Psoas muscle (tissue), 8 donors: ENCODE measurements at regions of chr12 and their contacts with region 1.

Region 1: DNA sequence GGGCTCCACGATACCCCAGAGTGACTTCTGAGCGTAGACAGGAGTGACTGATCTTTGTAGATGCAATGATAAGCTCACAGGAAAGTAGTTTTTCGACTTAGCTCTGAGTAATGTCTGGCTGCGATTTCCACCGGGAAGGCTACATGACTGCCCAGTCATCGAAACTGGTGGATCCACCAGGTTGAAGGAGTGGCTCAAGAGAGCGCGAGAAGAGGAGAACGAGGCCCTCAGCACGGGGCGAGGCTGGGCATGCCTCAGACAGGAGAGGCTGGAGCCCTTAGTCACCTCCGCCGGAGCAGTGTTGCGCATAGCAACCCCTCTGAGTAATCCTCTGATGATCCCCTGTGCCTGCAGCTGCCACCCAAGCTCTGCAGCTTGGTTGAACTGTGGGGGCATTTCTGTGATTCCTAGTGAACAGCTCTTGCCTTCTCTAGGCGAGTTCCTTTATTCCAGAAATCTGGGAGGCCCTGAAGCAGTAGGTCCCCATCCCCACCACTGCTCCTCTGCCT is 25.6 kb downstream of the ELK3 start:
- DNase-seq: no peak
- ATAC-seq: peak in 3 of 4 donors; percentile 27 to 60 (median 36)
- H3K4me3 ChIP-seq: no peak overlapping the region
- H3K27ac ChIP-seq: no peak overlapping the region
- H3K4me1 ChIP-seq: peaks cover 4% of the 10 kb centered on the region
- H3K27me3 ChIP-seq: peaks cover 0 to 7% (median 0%) of the 10 kb centered on the region in 3 donors
- CTCF ChIP-seq: no peak

Region 2: DNA sequence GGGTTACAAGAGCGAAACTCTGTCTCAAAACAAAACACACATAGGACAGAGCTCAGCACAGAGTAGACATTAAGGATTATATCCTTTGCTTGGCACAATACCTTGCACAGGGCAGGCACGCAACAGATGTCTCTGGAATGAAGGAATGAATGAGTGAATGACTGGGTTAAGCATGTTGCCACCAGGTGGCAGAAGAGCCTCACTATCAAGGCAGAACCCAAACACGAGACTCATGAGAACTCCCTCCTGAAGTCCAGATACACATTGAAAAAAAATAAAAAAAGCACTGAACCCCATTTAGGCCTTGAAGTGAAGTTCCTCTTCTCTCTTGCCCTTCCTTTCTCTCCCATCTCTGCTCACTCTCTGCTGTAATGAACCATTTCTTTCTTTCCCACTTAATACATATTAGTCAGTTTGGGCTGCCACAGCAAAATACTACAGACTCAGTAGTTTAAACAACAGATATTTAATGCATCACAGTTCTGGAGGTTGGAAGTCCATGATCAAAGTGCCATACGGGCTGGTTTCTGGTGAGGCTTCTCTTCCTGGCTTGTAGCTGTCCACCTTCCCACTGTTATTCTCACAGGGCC is 157.8 kb before region 1 on chr12:
- intact Hi-C with region 1: loop called in 1 of 2 experiments (anchors 1 kb)
- DNase-seq: peak; percentile 66 to 73
- ATAC-seq: peak in 3 of 4 donors; percentile 67 to 78 (median 77)
- H3K4me3 ChIP-seq: no peak overlapping the region
- H3K27ac ChIP-seq: no peak overlapping the region
- H3K4me1 ChIP-seq: no peaks in the 10 kb centered on the region
- H3K27me3 ChIP-seq: no peaks in the 10 kb centered on the region
- CTCF ChIP-seq: peak; percentile 68